CD14-positive monocyte (primary cell): ENCODE measurements at regions of chr1 and their contacts with region 1.

Region 1: DNA sequence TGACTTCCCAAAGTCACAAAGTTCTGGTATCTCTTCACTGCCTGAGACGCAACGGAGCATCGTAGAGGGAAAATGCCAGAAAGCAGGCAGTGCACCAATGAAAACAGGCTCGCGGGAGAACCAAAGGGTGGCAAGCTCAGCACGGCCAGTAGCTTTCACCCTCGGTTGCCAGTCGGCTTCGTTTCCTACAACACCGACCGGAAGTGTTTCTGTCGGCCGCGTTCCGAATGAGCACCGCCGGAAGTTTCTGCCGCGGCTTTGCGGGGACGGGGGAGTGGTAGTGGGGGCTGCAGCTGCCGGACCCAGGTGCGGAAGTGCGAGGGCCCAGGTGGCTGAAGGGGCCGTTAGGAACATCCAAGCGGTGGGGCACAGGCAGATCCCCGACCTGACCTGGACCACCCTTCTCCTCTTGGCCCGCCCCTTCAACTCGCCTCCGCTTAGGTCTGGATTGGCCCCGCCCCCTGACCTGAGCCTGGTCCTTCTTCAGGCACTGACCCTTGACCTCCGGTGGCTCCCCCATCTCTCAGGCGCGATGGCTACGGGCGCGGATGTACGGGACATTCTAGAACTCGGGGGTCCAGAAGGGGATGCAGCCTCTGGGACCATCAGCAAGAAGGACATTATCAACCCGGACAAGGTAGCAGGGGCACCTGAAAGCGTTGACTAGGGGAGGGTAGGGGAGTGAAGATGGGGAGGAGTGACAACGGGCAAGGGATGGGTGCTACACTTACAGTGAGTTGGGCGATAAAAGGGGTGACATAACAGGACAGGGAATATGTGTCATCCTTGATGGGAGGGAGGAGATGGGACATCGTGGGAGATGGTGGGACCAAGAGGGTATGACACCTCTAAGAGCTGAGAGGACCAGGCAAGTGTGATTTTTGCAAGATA is at the start of gene DMAP1:
- DNase-seq: peak; percentile 80 to 84 (median 83)
- H3K4me3 ChIP-seq: peak within 1 kb of the TSS; percentile 72 to 98 (median 78)
- H3K4me3 Mint-ChIP-seq: peak within 1 kb of the TSS; percentile 91 to 95
- H3K27ac ChIP-seq: peak within 1 kb of the TSS in 1 of 2 donors; percentile 79
- H3K27ac Mint-ChIP-seq: peak within 1 kb of the TSS; percentile 66 to 95 (median 88)
- H3K4me1 ChIP-seq: peaks cover 17 to 22% of the 10 kb centered on the region in 2 donors
- H3K4me1 Mint-ChIP-seq: peaks cover 17% of the 10 kb centered on the region
- H3K27me3 ChIP-seq: no peaks in the 10 kb centered on the region
- H3K27me3 Mint-ChIP-seq: peaks cover 0 to 6% (median 1%) of the 10 kb centered on the region in 3 donors
- CTCF ChIP-seq: no peak
- polyA plus RNA-seq, gene DMAP1: 18.9 to 51.4 (median 21.3) TPM

Region 2: DNA sequence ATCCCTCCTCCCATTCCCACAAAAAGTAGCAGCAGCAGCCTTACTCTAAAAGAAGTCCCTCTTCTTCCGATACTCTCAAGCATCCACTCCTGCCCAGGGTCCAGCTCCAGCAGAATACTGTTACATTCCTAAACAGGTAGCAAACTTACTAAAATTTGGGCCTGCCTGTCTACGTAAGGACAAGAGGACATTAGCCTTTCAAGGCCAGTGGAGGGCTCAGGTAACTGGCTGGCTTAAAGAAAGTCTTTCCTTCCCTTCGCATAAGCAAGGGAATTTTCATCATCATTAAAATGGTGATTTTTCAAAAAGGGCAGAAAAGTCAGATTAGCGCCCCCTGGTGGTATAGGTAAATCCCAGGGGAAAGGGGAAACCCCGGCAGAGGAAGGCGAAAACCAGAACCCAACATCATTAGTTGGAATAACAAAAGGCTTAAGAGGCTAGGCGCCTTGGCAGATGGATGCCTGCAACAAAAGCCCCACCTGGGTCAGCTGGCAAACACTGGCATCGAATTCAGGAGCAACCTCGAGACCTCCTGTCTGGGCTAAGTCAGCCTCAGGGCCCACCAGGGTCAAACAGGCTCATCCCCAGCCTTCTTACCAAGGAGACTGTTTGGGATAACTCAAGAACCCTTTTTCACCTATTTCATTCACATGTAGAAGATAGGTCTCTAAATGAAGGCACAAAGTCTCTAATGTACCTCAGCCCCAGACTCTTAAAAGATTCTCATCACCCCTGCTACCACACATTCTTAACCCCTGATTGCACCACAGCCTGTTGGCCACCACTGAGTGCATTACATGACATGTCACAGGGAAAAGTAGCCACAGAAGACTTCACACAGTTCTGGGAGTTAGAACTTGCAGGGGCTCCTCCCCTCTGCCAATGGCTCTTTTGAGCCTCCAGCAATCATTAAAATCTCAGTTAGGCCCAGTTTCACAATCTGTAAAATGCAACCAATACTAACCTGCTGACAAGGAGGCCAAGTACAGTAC is 104.9 kb after region 1 on chr1:
- intact Hi-C with region 1: loop called (anchors 1 to 5 kb)
- DNase-seq: peak; percentile 36 to 55 (median 53)
- H3K4me3 ChIP-seq: no peak overlapping the region
- H3K4me3 Mint-ChIP-seq: no peak overlapping the region
- H3K27ac ChIP-seq: no peak overlapping the region
- H3K27ac Mint-ChIP-seq: peak overlapping the region in 1 of 7 donors; percentile 5
- H3K4me1 ChIP-seq: no peaks in the 10 kb centered on the region
- H3K4me1 Mint-ChIP-seq: no peaks in the 10 kb centered on the region
- H3K27me3 ChIP-seq: no peaks in the 10 kb centered on the region
- H3K27me3 Mint-ChIP-seq: no peaks in the 10 kb centered on the region
- CTCF ChIP-seq: peak; percentile 91

Region 3: DNA sequence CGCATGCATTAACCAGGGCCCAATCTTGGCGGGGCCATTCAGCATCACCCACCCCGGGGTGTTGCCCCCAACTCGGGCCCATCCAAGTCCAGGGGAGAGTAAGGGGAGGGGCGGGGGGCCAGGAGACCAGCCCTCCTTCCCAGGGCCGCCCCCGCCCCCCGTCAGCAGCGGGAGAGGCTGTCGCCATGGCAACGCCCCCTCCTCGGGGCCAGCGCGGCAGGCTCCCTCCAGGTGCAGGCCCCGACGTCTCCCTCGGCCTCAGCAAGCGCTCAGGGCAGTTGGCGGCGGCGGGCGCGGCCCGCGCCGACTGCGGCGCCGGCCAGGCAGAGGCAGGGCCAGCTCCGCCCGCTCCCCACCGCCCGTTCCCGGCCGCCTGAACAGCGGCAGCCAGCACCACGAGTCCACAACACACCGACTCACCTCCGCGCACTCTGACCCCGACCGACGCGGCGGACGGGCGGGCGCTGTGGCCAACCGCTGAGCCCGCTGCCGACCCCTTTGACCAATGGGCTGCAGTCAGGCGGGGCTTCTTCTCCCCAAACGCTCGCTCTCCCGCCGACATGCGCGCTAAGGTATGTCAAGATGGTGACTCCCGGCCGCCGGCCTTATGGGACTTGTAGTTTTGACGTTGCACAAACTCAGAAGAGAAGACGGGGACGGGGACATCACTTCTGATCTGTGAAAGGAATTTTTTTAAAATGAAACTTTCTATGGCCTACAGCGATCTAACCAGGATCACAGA is 141.5 kb after region 1 on chr1 and contains the start of gene ERI3:
- intact Hi-C with region 1: loop called in 1 of 2 experiments (anchors 10 kb)
- DNase-seq: peak; percentile 96 to 97 (median 96)
- H3K4me3 ChIP-seq: peak within 1 kb of the TSS; percentile 52 to 90 (median 60)
- H3K4me3 Mint-ChIP-seq: peak within 1 kb of the TSS; percentile 81 to 82
- H3K27ac ChIP-seq: peak within 1 kb of the TSS; percentile 17 to 87
- H3K27ac Mint-ChIP-seq: peak within 1 kb of the TSS; percentile 62 to 93 (median 86)
- H3K4me1 ChIP-seq: peaks cover 11 to 17% of the 10 kb centered on the region in 2 donors
- H3K4me1 Mint-ChIP-seq: peaks cover 20% of the 10 kb centered on the region
- H3K27me3 ChIP-seq: no peaks in the 10 kb centered on the region
- H3K27me3 Mint-ChIP-seq: peaks cover 0 to 1% (median 0%) of the 10 kb centered on the region in 3 donors
- CTCF ChIP-seq: no peak
- polyA plus RNA-seq, gene ERI3: 26.4 to 35.0 (median 26.6) TPM

Region 4: GRCh38 chr1:44594871-44595746 is 381.6 kb after region 1 on chr1:
- intact Hi-C with region 1: loop called in 1 of 2 experiments (anchors 10 kb)
- DNase-seq: peak; percentile 64 to 71 (median 71)
- H3K4me3 ChIP-seq: no peak overlapping the region
- H3K4me3 Mint-ChIP-seq: no peak overlapping the region
- H3K27ac ChIP-seq: no peak overlapping the region
- H3K27ac Mint-ChIP-seq: peak overlapping the region in 1 of 7 donors; percentile 64
- H3K4me1 ChIP-seq: peaks cover 14 to 17% of the 10 kb centered on the region in 2 donors
- H3K4me1 Mint-ChIP-seq: peaks cover 20% of the 10 kb centered on the region
- H3K27me3 ChIP-seq: no peaks in the 10 kb centered on the region
- H3K27me3 Mint-ChIP-seq: peaks cover 0 to 3% (median 3%) of the 10 kb centered on the region in 3 donors
- CTCF ChIP-seq: peak; percentile 99